ENCODE measurements at regions of chr21 and their contacts with region 1.

Region 1: GRCh38 chr21:29298348-29299045 is at the start of gene BACH1:
- DNase-seq: peak; percentile 92
- ATAC-seq: peak; percentile 81
- H3K4me3 ChIP-seq: peak within 1 kb of the TSS; percentile 85
- H3K27ac ChIP-seq: peak within 1 kb of the TSS; percentile 51
- H3K4me1 ChIP-seq: peaks cover 40% of the 10 kb centered on the region
- H3K27me3 ChIP-seq: no peaks in the 10 kb centered on the region
- CTCF ChIP-seq: peak; percentile 13; the same call in 1 of the 2 replicates
- total RNA-seq, gene BACH1: 17.2 and 21.1 TPM in 2 replicates

Region 2: DNA sequence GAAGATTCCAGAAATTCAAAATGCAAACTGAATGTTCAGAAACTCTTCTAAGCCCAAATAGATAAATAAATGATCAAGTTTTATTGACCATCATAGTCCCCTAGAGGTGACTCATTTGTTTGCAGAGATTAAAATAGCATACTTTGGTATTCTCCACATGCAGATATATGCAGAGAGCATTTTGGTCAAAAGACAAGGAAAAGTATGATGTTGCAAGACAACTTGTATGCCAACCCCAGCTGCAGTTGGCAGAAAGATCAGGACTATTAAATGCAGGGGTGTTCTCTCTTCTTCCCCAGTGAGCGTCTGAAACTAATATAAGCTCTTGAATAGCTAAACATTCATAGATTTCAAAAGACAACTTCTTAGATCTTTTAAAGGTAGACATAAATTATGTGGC is 710.7 kb before region 1 on chr21:
- CTCF ChIA-PET with region 1: no interaction called
- POLR2A ChIA-PET with region 1: no interaction called
- intact Hi-C with region 1: no loop called
- DNase-seq: peak; percentile 88
- ATAC-seq: peak; percentile 98
- H3K4me3 ChIP-seq: peak overlapping the region; percentile 19; the same call in 1 of the 2 replicates
- H3K27ac ChIP-seq: peak overlapping the region; percentile 86
- H3K4me1 ChIP-seq: peaks cover 21% of the 10 kb centered on the region
- H3K27me3 ChIP-seq: no peaks in the 10 kb centered on the region
- CTCF ChIP-seq: no peak

Region 3: GRCh38 chr21:29091032-29091431 is 207.5 kb before region 1 on chr21:
- CTCF ChIA-PET with region 1: no interaction called
- POLR2A ChIA-PET with region 1: no interaction called
- intact Hi-C with region 1: loop called (anchors 1 kb)
- DNase-seq: peak; percentile 84
- ATAC-seq: peak; percentile 89
- H3K4me3 ChIP-seq: no peak overlapping the region
- H3K27ac ChIP-seq: peak overlapping the region; percentile 7; the same call in 1 of the 2 replicates
- H3K4me1 ChIP-seq: peaks cover 16% of the 10 kb centered on the region
- H3K27me3 ChIP-seq: no peaks in the 10 kb centered on the region
- CTCF ChIP-seq: no peak

Region 4: GRCh38 chr21:29164325-29164942 is 134.1 kb before region 1 on chr21:
- CTCF ChIA-PET with region 1: interaction called, 4 read pairs
- POLR2A ChIA-PET with region 1: no interaction called
- intact Hi-C with region 1: loop called (anchors 1 kb)
- DNase-seq: peak; percentile 86
- ATAC-seq: peak; percentile 65
- H3K4me3 ChIP-seq: no peak overlapping the region
- H3K27ac ChIP-seq: no peak overlapping the region
- H3K4me1 ChIP-seq: peaks cover 15% of the 10 kb centered on the region
- H3K27me3 ChIP-seq: no peaks in the 10 kb centered on the region
- CTCF ChIP-seq: peak; percentile 95

Region 5: GRCh38 chr21:29217818-29218291 is 80.6 kb before region 1 on chr21:
- CTCF ChIA-PET with region 1: no interaction called
- POLR2A ChIA-PET with region 1: interaction called, 7 read pairs
- intact Hi-C with region 1: loop called (anchors 2 kb)
- DNase-seq: peak; percentile 98
- ATAC-seq: peak; percentile 92
- H3K4me3 ChIP-seq: peak overlapping the region; percentile 44; the same call in 1 of the 2 replicates
- H3K27ac ChIP-seq: peak overlapping the region; percentile 91
- H3K4me1 ChIP-seq: peaks cover 34% of the 10 kb centered on the region
- H3K27me3 ChIP-seq: no peaks in the 10 kb centered on the region
- CTCF ChIP-seq: no peak

Region 6: DNA sequence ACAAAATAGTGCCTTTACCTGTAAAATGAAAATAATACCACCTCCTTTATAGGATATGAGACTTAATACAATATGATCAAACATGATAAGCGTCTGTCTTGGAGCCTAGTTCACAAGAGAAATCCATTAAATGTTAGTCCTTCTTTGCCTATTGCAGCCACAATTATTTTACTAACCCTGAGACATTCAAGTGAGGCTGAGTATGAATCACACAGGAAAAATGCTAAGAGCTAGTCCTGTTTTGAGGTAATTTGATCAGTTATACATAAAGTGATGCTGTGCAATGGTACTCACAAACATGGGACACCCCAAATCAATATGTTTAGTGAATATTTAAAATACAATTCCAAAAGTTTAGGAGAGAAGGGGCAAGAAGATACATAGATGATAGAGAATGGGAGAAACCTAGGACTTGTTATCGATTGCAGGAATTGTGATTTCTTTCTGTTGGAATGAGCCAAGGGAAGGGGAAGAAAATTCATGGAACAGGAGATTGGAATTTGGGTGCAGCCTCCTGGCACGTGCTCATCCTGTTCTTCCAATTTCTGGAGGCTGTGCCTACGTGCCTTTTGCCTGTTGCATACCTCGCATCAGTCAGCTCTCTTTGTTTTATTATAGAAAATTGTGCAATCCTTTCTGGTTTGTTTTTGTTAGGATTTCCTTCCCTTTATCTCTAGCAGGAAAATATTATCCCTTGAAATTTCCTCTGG is 39.7 kb before region 1 on chr21:
- CTCF ChIA-PET with region 1: no interaction called
- POLR2A ChIA-PET with region 1: no interaction called
- intact Hi-C with region 1: loop called (anchors 2 kb)
- DNase-seq: peak; percentile 89
- ATAC-seq: peak; percentile 81
- H3K4me3 ChIP-seq: peak overlapping the region; percentile 34; the same call in 1 of the 2 replicates
- H3K27ac ChIP-seq: peak overlapping the region; percentile 55
- H3K4me1 ChIP-seq: peaks cover 53% of the 10 kb centered on the region
- H3K27me3 ChIP-seq: no peaks in the 10 kb centered on the region
- CTCF ChIP-seq: no peak

Region 7: GRCh38 chr21:29279558-29279957 is 18.9 kb before region 1 on chr21:
- CTCF ChIA-PET with region 1: no interaction called
- POLR2A ChIA-PET with region 1: no interaction called
- intact Hi-C with region 1: no loop called
- DNase-seq: no peak
- ATAC-seq: no peak
- H3K4me3 ChIP-seq: no peak overlapping the region
- H3K27ac ChIP-seq: no peak overlapping the region
- H3K4me1 ChIP-seq: no peaks in the 10 kb centered on the region
- H3K27me3 ChIP-seq: no peaks in the 10 kb centered on the region
- CTCF ChIP-seq: no peak

Region 8: GRCh38 chr21:29334712-29335428 is 36.4 kb after region 1 on chr21:
- CTCF ChIA-PET with region 1: no interaction called
- POLR2A ChIA-PET with region 1: no interaction called
- intact Hi-C with region 1: loop called (anchors 1 kb)
- DNase-seq: no peak
- ATAC-seq: no peak
- H3K4me3 ChIP-seq: no peak overlapping the region
- H3K27ac ChIP-seq: no peak overlapping the region
- H3K4me1 ChIP-seq: peaks cover 7% of the 10 kb centered on the region
- H3K27me3 ChIP-seq: no peaks in the 10 kb centered on the region
- CTCF ChIP-seq: no peak

Region 9: DNA sequence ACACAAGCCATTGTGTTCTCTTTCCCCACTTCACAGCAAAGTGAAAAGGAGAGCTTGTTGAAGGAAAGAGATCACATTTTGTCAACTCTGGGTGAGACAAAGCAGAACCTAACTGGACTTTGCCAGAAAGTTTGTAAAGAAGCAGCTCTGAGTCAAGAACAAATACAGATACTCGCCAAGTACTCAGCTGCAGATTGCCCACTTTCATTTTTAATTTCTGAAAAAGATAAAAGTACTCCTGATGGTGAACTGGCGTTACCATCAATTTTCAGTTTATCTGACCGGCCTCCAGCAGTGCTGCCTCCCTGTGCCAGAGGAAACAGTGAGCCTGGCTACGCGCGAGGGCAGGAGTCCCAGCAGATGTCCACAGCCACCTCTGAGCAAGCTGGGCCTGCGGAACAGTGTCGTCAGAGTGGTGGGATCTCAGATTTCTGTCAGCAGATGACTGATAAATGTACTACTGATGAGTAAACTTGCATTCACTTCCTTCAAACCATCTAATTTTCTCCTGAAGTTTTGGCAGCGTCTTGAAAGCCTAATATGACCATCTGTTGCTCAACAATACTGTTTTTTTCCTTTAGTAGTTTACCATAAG is 44.0 kb after region 1 on chr21:
- CTCF ChIA-PET with region 1: interaction called, 9 read pairs
- POLR2A ChIA-PET with region 1: interaction called, 4 read pairs
- intact Hi-C with region 1: loop called (anchors 2 kb)
- DNase-seq: peak; percentile 96
- ATAC-seq: peak; percentile 99
- H3K4me3 ChIP-seq: peak overlapping the region; percentile 42
- H3K27ac ChIP-seq: peak overlapping the region; percentile 83
- H3K4me1 ChIP-seq: peaks cover 28% of the 10 kb centered on the region
- H3K27me3 ChIP-seq: no peaks in the 10 kb centered on the region
- CTCF ChIP-seq: peak; percentile 22; the same call in 1 of the 2 replicates

Region 10: GRCh38 chr21:29477347-29477746 is 178.8 kb after region 1 on chr21:
- CTCF ChIA-PET with region 1: no interaction called
- POLR2A ChIA-PET with region 1: no interaction called
- intact Hi-C with region 1: no loop called
- DNase-seq: no peak
- ATAC-seq: no peak
- H3K4me3 ChIP-seq: no peak overlapping the region
- H3K27ac ChIP-seq: no peak overlapping the region
- H3K4me1 ChIP-seq: no peaks in the 10 kb centered on the region
- H3K27me3 ChIP-seq: no peaks in the 10 kb centered on the region
- CTCF ChIP-seq: no peak

Region 11: DNA sequence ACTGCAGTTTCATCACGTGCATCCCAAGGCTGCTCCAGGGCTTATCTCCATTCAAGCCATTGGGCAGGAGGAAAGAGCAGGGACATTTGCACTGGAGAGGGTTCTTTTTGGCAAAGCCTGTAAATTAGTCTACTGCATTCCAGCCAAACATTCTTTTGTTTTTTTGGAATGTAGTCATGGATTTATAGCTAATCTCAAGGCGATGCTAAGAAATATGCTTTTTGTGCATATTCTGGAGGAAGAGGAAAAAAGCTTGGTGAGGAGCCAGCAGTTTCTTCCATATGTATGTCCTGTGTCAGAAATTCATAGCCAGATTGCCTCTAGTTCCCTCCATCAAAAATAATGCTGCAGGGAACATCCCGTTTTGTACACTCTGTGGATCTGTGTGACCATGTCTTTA is 221.7 kb after region 1 on chr21:
- CTCF ChIA-PET with region 1: no interaction called
- POLR2A ChIA-PET with region 1: no interaction called
- intact Hi-C with region 1: no loop called
- DNase-seq: no peak
- ATAC-seq: no peak
- H3K4me3 ChIP-seq: no peak overlapping the region
- H3K27ac ChIP-seq: no peak overlapping the region
- H3K4me1 ChIP-seq: no peaks in the 10 kb centered on the region
- H3K27me3 ChIP-seq: 0 out of 2 replicates have a peak, but pooled peaks cover 5% of the 10 kb centered on the region
- CTCF ChIP-seq: no peak

Measured in PC-3 (cell line).